ENCODE measurements at regions of chr16 and their contacts with region 1.

Region 1: GRCh38 chr16:75764154-75764768 is 38.0 kb upstream of the CPHXL start:
- DNase-seq: peak; percentile 88
- H3K4me3 ChIP-seq: peak overlapping the region; percentile 37
- H3K27ac ChIP-seq: peak overlapping the region; percentile 45
- H3K4me1 ChIP-seq: peaks cover 38% of the 10 kb centered on the region
- CTCF ChIP-seq: peak; percentile 96

Region 2: GRCh38 chr16:75198135-75198600 is 566.1 kb before region 1 on chr16:
- CTCF ChIA-PET with region 1: no interaction called
- POLR2A ChIA-PET with region 1: no interaction called
- intact Hi-C with region 1: loop called (anchors 1 kb)
- DNase-seq: no peak
- H3K4me3 ChIP-seq: no peak overlapping the region
- H3K27ac ChIP-seq: no peak overlapping the region
- H3K4me1 ChIP-seq: peaks cover 10% of the 10 kb centered on the region
- CTCF ChIP-seq: no peak

Region 3: DNA sequence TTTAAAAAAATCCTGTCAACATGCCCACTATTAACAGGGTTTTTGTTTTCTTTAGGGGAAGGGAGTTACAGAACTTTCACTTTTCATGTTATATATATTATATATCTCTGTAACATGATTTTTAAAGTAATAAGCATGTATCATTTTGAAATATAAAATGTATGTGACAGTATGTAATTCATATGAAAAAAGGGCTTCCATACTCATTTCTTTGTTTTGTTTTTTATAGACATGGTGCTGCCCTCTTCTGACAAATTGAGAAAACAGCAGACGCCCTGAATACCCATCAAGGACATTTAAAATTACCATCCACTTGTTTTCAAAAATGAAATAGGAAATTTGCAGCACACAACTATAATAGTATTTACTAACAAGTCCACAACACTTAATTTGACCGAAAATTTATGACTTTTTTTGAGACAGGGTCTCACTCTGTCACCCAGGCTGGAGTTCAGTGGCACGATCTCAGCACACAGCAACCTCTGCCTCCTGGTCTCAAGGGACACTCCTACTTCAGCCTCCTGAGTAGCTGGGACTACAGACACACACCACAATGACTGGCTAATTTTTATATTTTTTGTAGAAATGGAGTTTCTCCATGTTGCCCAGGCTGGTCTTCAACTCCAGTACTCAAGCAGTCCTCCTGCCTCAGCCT is 361.3 kb before region 1 on chr16:
- CTCF ChIA-PET with region 1: no interaction called
- POLR2A ChIA-PET with region 1: no interaction called
- intact Hi-C with region 1: loop called (anchors 10 kb)
- DNase-seq: peak; percentile 42
- H3K4me3 ChIP-seq: no peak overlapping the region
- H3K27ac ChIP-seq: no peak overlapping the region
- H3K4me1 ChIP-seq: no peaks in the 10 kb centered on the region
- CTCF ChIP-seq: peak; percentile 88

Region 4: DNA sequence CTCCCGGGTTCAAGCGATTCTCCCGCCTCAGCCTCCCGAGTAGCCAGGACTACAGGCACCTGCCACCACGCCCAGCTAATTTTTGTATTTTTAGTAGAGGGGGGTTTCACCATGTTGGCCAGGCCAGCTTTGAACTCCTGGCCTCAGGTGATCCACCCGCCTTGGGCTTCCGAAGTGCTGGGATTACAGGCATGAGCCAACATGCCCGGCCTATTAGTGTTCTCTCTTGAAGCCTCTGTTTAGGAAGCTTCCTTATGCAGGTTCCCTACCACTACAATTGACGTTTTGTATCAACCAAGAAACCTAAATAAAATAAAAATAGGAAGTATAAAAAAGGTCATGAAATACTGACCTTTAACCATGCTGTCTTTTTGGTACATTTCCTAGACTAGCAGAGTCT is 244.4 kb before region 1 on chr16:
- CTCF ChIA-PET with region 1: no interaction called
- POLR2A ChIA-PET with region 1: no interaction called
- intact Hi-C with region 1: loop called (anchors 1 kb)
- DNase-seq: no peak
- H3K4me3 ChIP-seq: no peak overlapping the region
- H3K27ac ChIP-seq: no peak overlapping the region
- H3K4me1 ChIP-seq: peaks cover 6% of the 10 kb centered on the region
- CTCF ChIP-seq: no peak

Region 5: GRCh38 chr16:75622761-75623605 is 141.3 kb before region 1 on chr16 and contains the start of gene ADAT1:
- CTCF ChIA-PET with region 1: interaction called, 6 read pairs
- POLR2A ChIA-PET with region 1: interaction called, 10 read pairs
- intact Hi-C with region 1: loop called (anchors 1 kb)
- DNase-seq: peak; percentile 98
- H3K4me3 ChIP-seq: peak within 1 kb of the TSS; percentile 82
- H3K27ac ChIP-seq: peak within 1 kb of the TSS; percentile 59
- H3K4me1 ChIP-seq: peaks cover 22% of the 10 kb centered on the region
- CTCF ChIP-seq: no peak
- total RNA-seq, gene ADAT1: 46.8 and 53.4 TPM in 2 replicates

Measured in OCI-LY7 (cell line).